AG04450 (cell line): ENCODE measurements at regions of chr3 and their contacts with region 1.

Region 1: DNA sequence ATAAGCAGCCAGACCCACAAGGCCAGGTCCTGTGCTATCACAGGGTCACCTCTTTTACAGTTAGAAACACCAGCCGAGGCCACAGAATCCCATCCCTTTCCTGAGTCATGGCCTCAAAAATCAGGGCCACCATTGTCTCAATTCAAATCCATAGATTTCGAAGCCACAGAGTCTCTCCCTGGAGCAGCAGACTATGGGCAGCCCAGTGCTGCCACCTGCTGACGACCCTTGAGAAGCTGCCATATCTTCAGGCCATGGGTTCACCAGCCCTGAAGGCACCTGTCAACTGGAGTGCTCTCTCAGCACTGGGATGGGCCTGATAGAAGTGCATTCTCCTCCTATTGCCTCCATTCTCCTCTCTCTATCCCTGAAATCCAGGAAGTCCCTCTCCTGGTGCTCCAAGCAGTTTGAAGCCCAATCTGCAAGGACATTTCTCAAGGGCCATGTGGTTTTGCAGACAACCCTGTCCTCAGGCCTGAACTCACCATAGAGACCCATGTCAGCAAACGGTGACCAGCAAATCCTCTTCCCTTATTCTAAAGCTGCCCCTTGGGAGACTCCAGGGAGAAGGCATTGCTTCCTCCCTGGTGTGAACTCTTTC is 39.6 kb downstream of the TGM4 start:
- DNase-seq: peak; percentile 52
- H3K4me3 ChIP-seq: no peak overlapping the region
- H3K27ac ChIP-seq: no peak overlapping the region
- H3K27me3 ChIP-seq: peaks cover 4% of the 10 kb centered on the region
- CTCF ChIP-seq: peak; percentile 93

Region 2: GRCh38 chr3:44529927-44530326 is 384.0 kb before region 1 on chr3:
- CTCF ChIA-PET with region 1: interaction called, 29 read pairs
- POLR2A ChIA-PET with region 1: no interaction called
- DNase-seq: no peak
- H3K4me3 ChIP-seq: no peak overlapping the region
- H3K27ac ChIP-seq: no peak overlapping the region
- H3K27me3 ChIP-seq: peaks cover 6% of the 10 kb centered on the region
- CTCF ChIP-seq: peak; percentile 27

Region 3: GRCh38 chr3:44848634-44849033 is 65.3 kb before region 1 on chr3:
- CTCF ChIA-PET with region 1: interaction called, 10 read pairs
- POLR2A ChIA-PET with region 1: no interaction called
- DNase-seq: no peak
- H3K4me3 ChIP-seq: no peak overlapping the region
- H3K27ac ChIP-seq: no peak overlapping the region
- H3K27me3 ChIP-seq: no peaks in the 10 kb centered on the region
- CTCF ChIP-seq: no peak

Region 4: DNA sequence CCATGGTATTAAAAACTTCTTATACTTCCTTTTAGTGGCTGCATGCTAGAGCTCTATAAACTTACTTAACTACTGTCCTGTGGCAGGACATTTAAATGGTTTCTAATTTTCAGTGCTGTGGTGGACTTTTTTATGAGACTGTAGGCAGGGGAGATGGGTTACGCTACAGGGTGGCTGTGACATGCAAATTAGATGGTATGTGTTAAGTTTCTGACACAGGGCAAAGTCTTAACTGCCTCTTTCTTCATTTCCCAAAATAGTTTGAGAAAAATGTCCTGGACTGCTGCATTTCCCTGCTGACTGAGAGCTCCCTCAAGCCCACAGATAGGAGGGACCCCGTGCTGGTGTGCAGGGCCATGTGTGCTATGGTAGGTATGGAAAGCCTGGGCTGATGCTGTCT is 17.5 kb before region 1 on chr3:
- CTCF ChIA-PET with region 1: interaction called, 11 read pairs
- POLR2A ChIA-PET with region 1: no interaction called
- DNase-seq: no peak
- H3K4me3 ChIP-seq: no peak overlapping the region
- H3K27ac ChIP-seq: no peak overlapping the region
- H3K27me3 ChIP-seq: peaks cover 5% of the 10 kb centered on the region
- CTCF ChIP-seq: no peak

Region 5: GRCh38 chr3:44902628-44903027 is 11.3 kb before region 1 on chr3:
- CTCF ChIA-PET with region 1: interaction called, 12 read pairs
- POLR2A ChIA-PET with region 1: no interaction called
- DNase-seq: no peak
- H3K4me3 ChIP-seq: no peak overlapping the region
- H3K27ac ChIP-seq: no peak overlapping the region
- H3K27me3 ChIP-seq: peaks cover 5% of the 10 kb centered on the region
- CTCF ChIP-seq: no peak

Region 6: GRCh38 chr3:44939581-44940111 is 25.7 kb after region 1 on chr3:
- CTCF ChIA-PET with region 1: interaction called, 19 read pairs
- POLR2A ChIA-PET with region 1: no interaction called
- DNase-seq: no peak
- H3K4me3 ChIP-seq: no peak overlapping the region
- H3K27ac ChIP-seq: peak overlapping the region; percentile 31
- H3K27me3 ChIP-seq: no peaks in the 10 kb centered on the region
- CTCF ChIP-seq: no peak